Astrocyte of the cerebellum (primary cell): ENCODE measurements at regions of chr14 and their contacts with region 1.

Region 1: GRCh38 chr14:28785096-28785952 is 18.7 kb downstream of the FOXG1 start:
- DNase-seq: no peak
- H3K4me3 ChIP-seq: peak overlapping the region; percentile 52
- CTCF ChIP-seq: no peak

Region 2: GRCh38 chr14:29016050-29016900 is 231.0 kb after region 1 on chr14:
- in situ Hi-C with region 1: no loop called
- DNase-seq: peak; percentile 38
- H3K4me3 ChIP-seq: no peak overlapping the region
- CTCF ChIP-seq: peak; percentile 91

Region 3: GRCh38 chr14:29242755-29243754 is 457.7 kb after region 1 on chr14:
- in situ Hi-C with region 1: loop called (anchors 25 kb)
- DNase-seq: peak; percentile 63
- H3K4me3 ChIP-seq: no peak overlapping the region
- CTCF ChIP-seq: no peak